HEK293 (cell line): ENCODE measurements at regions of chr4 and their contacts with region 1.

Region 1: DNA sequence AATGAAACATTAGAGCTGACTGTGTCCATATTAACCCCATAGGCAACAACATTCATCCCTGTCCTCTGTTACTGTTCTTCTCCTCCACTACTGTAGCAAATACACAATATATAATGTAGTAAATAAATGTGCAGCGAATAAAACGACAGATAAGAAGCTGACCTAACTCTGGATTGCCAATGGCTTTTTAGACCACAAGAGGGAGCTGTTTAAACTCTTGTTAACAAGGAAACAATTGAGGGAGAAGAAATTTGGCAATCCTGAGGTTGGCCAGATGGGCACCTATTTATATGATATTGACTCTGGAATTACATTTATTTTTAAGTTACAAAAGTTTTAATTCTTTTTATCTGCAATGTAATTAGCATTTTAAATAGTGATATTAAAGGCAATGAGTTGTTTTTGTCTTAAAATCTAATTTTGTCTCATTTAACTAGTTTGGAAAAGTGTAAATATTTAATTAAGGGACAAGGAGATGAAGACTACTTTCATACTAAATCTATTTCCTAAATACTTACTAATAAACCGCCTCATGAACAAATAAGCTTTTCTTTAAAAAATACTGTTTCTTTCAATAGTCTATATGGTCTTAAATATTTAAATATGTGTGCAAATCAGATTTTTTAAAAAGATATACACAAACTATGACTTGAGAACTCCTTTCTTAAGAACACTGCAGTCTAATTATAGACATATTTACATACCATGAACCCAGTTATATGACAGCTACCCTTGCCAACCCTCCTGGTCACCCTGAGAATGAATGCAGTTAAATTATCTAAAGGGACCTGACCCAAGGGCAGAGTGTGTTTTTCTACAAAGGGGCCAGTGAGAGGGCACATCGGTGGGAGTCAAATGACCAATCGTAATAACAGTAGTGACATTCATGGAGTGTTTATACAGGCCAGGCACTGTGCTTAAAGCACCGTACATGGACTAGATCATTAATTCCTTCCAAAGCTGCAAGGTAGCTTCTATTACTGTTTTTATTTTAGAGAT is 52.9 kb upstream of the HPF1 start:
- H3K4me3 ChIP-seq: no peak overlapping the region
- H3K27ac ChIP-seq: no peak overlapping the region
- H3K4me1 ChIP-seq: no peaks in the 10 kb centered on the region
- CTCF ChIP-seq: no peak

Region 2: DNA sequence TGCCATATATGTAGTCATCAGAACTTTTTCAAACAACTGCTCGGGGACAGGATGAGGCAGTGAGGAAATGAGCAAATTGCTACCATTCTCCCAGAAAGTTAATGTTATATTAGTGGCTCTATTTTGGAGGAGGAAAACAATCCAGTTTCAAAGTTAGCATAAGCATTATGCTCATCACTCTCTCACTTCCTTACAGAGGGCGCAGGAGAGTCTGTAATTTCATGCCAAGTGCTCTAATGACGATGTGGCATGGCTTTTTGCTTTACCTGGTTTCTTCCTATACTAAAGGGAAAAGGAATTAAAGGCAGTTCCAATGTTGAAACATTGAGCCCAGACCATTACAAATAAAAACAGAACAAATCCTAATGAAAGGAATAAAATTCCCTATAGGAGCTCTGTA is 80.3 kb after region 1 on chr4:
- CTCF ChIA-PET with region 1: no interaction called
- POLR2A ChIA-PET with region 1: no interaction called
- H3K4me3 ChIP-seq: no peak overlapping the region
- H3K27ac ChIP-seq: no peak overlapping the region
- H3K4me1 ChIP-seq: no peaks in the 10 kb centered on the region
- CTCF ChIP-seq: no peak

Region 3: GRCh38 chr4:170008371-170008770 is 197.7 kb after region 1 on chr4:
- CTCF ChIA-PET with region 1: interaction called, 13 read pairs
- POLR2A ChIA-PET with region 1: no interaction called
- H3K4me3 ChIP-seq: no peak overlapping the region
- H3K27ac ChIP-seq: no peak overlapping the region
- H3K4me1 ChIP-seq: peaks cover 5% of the 10 kb centered on the region
- CTCF ChIP-seq: no peak

Region 4: DNA sequence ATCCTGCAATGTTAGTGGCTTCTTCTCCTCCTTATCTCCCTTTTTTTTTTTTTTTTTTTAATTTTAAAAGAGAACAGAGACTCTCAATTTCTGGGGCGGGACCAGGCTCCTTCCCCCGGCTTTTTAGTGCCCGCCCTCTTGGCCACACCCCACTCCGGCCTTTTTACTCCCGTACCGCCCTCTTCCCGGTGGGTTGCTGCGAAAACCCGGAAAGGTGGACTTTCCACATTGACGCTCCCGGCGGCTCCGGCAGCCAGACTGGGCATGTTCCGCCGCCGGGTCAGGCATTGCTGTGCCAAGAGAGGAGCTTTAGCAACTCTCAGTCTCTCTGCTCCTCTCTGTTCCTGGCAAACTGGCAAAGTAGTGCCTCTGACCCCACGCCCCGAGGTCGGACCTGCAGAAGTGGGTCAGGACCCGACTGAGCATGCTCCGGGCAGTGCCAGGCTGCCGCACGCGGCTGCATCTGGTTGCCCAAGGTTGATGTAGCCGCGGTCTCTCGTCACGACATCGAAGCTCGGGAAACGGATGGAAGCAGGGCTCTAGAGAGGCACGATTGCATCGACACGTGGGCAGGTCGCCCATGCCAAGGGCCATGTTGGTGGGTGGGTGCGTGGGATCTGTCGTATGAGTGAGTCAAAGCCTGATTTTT is 216.7 kb after region 1 on chr4:
- CTCF ChIA-PET with region 1: interaction called, 10 read pairs
- POLR2A ChIA-PET with region 1: interaction called, 4 read pairs
- H3K4me3 ChIP-seq: peak overlapping the region; percentile 62
- H3K27ac ChIP-seq: no peak overlapping the region; the same call in 1 of the 2 replicates
- H3K4me1 ChIP-seq: no peaks in the 10 kb centered on the region
- CTCF ChIP-seq: no peak

Region 5: GRCh38 chr4:170047771-170048354 is 237.2 kb after region 1 on chr4:
- CTCF ChIA-PET with region 1: interaction called, 23 read pairs
- POLR2A ChIA-PET with region 1: no interaction called
- H3K4me3 ChIP-seq: no peak overlapping the region
- H3K27ac ChIP-seq: no peak overlapping the region
- H3K4me1 ChIP-seq: no peaks in the 10 kb centered on the region
- CTCF ChIP-seq: no peak

Region 6: GRCh38 chr4:170307182-170307581 is 496.6 kb after region 1 on chr4:
- CTCF ChIA-PET with region 1: no interaction called
- POLR2A ChIA-PET with region 1: no interaction called
- H3K4me3 ChIP-seq: no peak overlapping the region
- H3K27ac ChIP-seq: no peak overlapping the region
- H3K4me1 ChIP-seq: no peaks in the 10 kb centered on the region
- CTCF ChIP-seq: no peak